ENCODE measurements at regions of chrX and their contacts with region 1.

Region 1: GRCh38 chrX:134764212-134764785 is 106.0 kb upstream of the PLAC1 start:
- DNase-seq: peak; percentile 36 to 62
- H3K4me3 ChIP-seq: no peak overlapping the region
- H3K4me3 Mint-ChIP-seq: peak overlapping the region; percentile 35
- H3K27ac Mint-ChIP-seq: no peak overlapping the region
- H3K4me1 ChIP-seq: no peaks in the 10 kb centered on the region
- H3K4me1 Mint-ChIP-seq: no peaks in the 10 kb centered on the region
- H3K27me3 ChIP-seq: no peaks in the 10 kb centered on the region
- H3K27me3 Mint-ChIP-seq: no peaks in the 10 kb centered on the region
- CTCF ChIP-seq: peak; percentile 18 to 51

Region 2: GRCh38 chrX:134423615-134424014 is 340.7 kb before region 1 on chrX:
- CTCF ChIA-PET with region 1: no interaction called
- POLR2A ChIA-PET with region 1: no interaction called
- intact Hi-C with region 1: loop called (anchors 10 kb)
- DNase-seq: no peak
- H3K4me3 ChIP-seq: no peak overlapping the region
- H3K4me3 Mint-ChIP-seq: no peak overlapping the region
- H3K27ac Mint-ChIP-seq: no peak overlapping the region
- H3K4me1 ChIP-seq: no peaks in the 10 kb centered on the region
- H3K4me1 Mint-ChIP-seq: no peaks in the 10 kb centered on the region
- H3K27me3 ChIP-seq: no peaks in the 10 kb centered on the region
- H3K27me3 Mint-ChIP-seq: no peaks in the 10 kb centered on the region
- CTCF ChIP-seq: peak; percentile 20 to 37

Region 3: GRCh38 chrX:134484039-134484438 is 280.3 kb before region 1 on chrX:
- CTCF ChIA-PET with region 1: interaction called, 5 read pairs
- POLR2A ChIA-PET with region 1: no interaction called
- intact Hi-C with region 1: loop called (anchors 5 kb)
- DNase-seq: peak in 1 of 2 experiments; percentile 29
- H3K4me3 ChIP-seq: no peak overlapping the region
- H3K4me3 Mint-ChIP-seq: no peak overlapping the region
- H3K27ac Mint-ChIP-seq: no peak overlapping the region
- H3K4me1 ChIP-seq: no peaks in the 10 kb centered on the region
- H3K4me1 Mint-ChIP-seq: no peaks in the 10 kb centered on the region
- H3K27me3 ChIP-seq: no peaks in the 10 kb centered on the region
- H3K27me3 Mint-ChIP-seq: no peaks in the 10 kb centered on the region
- CTCF ChIP-seq: peak in 1 of 2 experiments; percentile 24

Region 4: DNA sequence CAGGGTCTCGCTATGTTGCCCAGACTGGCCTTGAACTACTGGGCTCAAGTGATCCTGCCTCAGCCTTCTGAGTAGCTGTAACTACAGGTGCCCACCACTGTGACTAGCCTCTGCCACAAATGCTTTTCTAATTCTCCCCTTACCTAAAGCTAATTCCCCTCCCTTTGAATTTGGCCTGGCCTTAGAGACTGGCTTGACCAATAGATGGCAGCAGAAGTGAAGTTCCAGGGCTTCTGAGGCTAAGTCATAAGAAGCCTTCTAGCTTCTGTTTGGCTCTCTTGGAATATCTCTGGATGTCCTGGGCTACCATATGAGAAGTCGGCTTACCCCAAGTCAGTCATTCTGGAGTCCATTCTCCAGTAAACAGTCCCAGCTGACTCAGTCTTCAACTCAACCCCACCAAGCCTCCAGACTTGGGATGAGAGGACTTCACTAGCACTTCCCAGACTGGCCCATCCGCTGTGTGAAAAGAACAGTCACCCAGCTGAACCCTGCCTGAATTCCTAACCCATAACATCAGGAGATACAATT is 243.4 kb before region 1 on chrX:
- CTCF ChIA-PET with region 1: interaction called, 16 read pairs
- POLR2A ChIA-PET with region 1: no interaction called
- intact Hi-C with region 1: no loop called
- DNase-seq: peak; percentile 55 to 61
- H3K4me3 ChIP-seq: no peak overlapping the region
- H3K4me3 Mint-ChIP-seq: no peak overlapping the region
- H3K27ac Mint-ChIP-seq: no peak overlapping the region
- H3K4me1 ChIP-seq: no peaks in the 10 kb centered on the region
- H3K4me1 Mint-ChIP-seq: no peaks in the 10 kb centered on the region
- H3K27me3 ChIP-seq: no peaks in the 10 kb centered on the region
- H3K27me3 Mint-ChIP-seq: no peaks in the 10 kb centered on the region
- CTCF ChIP-seq: peak; percentile 47 to 67

Region 5: GRCh38 chrX:134753718-134754008 is 10.6 kb before region 1 on chrX:
- CTCF ChIA-PET with region 1: interaction called, 11 read pairs
- POLR2A ChIA-PET with region 1: no interaction called
- intact Hi-C with region 1: no loop called
- DNase-seq: peak in 1 of 2 experiments; percentile 9
- H3K4me3 ChIP-seq: no peak overlapping the region
- H3K4me3 Mint-ChIP-seq: no peak overlapping the region
- H3K27ac Mint-ChIP-seq: no peak overlapping the region
- H3K4me1 ChIP-seq: peaks cover 14% of the 10 kb centered on the region
- H3K4me1 Mint-ChIP-seq: peaks cover 16% of the 10 kb centered on the region
- H3K27me3 ChIP-seq: no peaks in the 10 kb centered on the region
- H3K27me3 Mint-ChIP-seq: no peaks in the 10 kb centered on the region
- CTCF ChIP-seq: no peak

Region 6: DNA sequence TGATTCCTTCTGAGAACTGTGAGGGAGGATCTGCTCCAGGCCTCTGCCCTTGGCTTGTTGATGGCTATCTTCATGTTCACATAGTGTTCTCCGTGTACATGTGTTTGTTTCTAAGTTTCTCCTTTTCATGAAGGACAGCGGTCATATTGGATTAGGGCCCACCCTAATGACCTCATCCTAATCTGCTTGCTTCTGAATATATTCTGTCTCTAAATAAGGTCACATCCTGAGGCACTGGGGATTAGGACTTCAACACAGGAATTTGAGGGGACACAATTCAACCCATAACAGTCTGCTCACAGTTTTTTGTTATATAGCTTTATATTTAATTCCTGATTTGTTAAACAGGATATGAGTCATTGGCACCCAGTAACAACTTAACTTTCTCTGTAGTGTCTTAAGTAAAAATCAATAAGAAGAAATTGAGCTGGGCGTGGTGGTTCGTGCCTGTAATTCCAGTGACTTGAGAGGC is 72.2 kb after region 1 on chrX:
- CTCF ChIA-PET with region 1: no interaction called
- POLR2A ChIA-PET with region 1: no interaction called
- intact Hi-C with region 1: no loop called
- DNase-seq: no peak
- H3K4me3 ChIP-seq: no peak overlapping the region
- H3K4me3 Mint-ChIP-seq: no peak overlapping the region
- H3K27ac Mint-ChIP-seq: no peak overlapping the region
- H3K4me1 ChIP-seq: no peaks in the 10 kb centered on the region
- H3K4me1 Mint-ChIP-seq: peaks cover 6% of the 10 kb centered on the region
- H3K27me3 ChIP-seq: no peaks in the 10 kb centered on the region
- H3K27me3 Mint-ChIP-seq: no peaks in the 10 kb centered on the region
- CTCF ChIP-seq: no peak

Measured in Caco-2 (cell line).